BJ (cell line): ENCODE measurements at regions of chr6 and their contacts with region 1.

Region 1: DNA sequence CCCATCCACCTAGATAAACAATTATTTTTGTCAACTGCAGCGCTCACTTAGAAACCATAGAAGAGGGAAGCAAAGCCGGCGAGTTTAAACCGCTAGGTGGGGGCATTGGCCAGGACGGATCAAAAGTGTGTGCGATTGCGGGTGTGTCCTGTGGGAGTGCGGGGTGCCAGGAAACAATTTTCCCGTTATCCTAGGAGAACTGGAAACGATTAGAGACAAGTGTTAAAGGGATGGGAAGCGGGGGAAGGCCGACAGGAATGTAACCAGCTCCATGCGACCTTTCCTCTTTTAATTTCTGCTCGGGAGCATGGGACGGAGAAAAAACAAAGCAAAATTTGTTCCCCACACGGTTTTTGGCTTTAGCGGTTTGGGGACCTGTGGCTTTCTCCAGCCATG is 2.8 kb upstream of the HTR1B start:
- DNase-seq: no peak
- H3K4me3 ChIP-seq: peak overlapping the region; percentile 49
- H3K27me3 ChIP-seq: peaks cover 11% of the 10 kb centered on the region
- CTCF ChIP-seq: peak; percentile 82

Region 2: DNA sequence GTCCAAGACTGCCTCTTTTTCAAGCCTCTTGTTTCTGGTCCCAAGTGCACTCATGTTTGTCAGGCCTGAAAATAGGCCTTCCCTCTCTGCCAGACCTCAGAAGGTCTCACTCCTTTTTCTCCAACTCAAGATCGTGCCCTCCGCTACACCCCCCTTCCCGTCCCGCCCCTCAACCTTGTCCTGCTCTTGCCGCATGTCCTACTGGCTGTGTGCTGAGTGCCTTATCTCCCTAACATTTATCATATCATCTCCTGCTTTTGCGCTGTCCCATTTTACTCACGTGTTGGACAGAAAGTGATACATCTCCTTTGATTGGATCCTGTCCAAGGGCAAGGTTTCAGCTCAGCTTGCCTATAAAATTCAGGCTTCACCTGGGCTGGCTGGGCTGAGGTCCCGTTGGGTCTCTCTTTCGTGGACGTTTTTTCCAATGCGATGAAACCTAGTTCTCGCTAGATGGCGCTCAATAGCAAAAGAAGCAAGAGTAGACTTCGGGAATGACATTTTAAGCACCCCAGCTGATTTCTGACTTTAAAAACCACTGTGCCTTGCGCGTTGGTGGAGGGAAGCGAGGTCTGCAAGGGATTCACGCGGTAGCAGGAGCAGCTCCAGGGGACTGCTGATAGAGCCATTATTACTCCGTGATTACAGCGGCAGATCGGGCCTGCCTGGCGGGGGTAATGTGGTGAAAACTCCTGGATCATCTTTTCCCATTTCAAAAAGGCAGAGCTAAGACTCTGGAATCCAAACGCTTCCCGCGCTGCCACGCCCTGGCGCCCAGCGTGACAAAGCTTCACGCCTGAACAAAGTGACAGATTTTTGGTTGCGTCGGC is 1531.2 kb before region 1 on chr6:
- CTCF ChIA-PET with region 1: interaction called, 24 read pairs
- POLR2A ChIA-PET with region 1: no interaction called
- DNase-seq: peak; percentile 35
- H3K4me3 ChIP-seq: peak overlapping the region; percentile 30
- H3K27me3 ChIP-seq: peaks cover 4% of the 10 kb centered on the region; the same call in 1 of the 2 replicates
- CTCF ChIP-seq: peak; percentile 79